CD14-positive monocyte (primary cell): ENCODE measurements at regions of chr9 and their contacts with region 1.

Region 1: GRCh38 chr9:26892251-26893029 is at the start of gene CAAP1:
- DNase-seq: peak; percentile 92 to 97 (median 93)
- H3K4me3 ChIP-seq: peak within 1 kb of the TSS; percentile 82 to 90 (median 87)
- H3K4me3 Mint-ChIP-seq: peak within 1 kb of the TSS; percentile 99 to 100
- H3K27ac ChIP-seq: peak within 1 kb of the TSS; percentile 83 to 91
- H3K27ac Mint-ChIP-seq: peak within 1 kb of the TSS; percentile 92 to 99 (median 98)
- H3K4me1 ChIP-seq: peaks cover 9 to 17% of the 10 kb centered on the region in 2 donors
- H3K4me1 Mint-ChIP-seq: peaks cover 24% of the 10 kb centered on the region
- H3K27me3 ChIP-seq: no peaks in the 10 kb centered on the region
- H3K27me3 Mint-ChIP-seq: peaks cover 0 to 3% (median 2%) of the 10 kb centered on the region in 3 donors
- CTCF ChIP-seq: peak; percentile 16
- polyA plus RNA-seq, gene CAAP1: 4.0 to 9.1 (median 8.7) TPM

Region 2: DNA sequence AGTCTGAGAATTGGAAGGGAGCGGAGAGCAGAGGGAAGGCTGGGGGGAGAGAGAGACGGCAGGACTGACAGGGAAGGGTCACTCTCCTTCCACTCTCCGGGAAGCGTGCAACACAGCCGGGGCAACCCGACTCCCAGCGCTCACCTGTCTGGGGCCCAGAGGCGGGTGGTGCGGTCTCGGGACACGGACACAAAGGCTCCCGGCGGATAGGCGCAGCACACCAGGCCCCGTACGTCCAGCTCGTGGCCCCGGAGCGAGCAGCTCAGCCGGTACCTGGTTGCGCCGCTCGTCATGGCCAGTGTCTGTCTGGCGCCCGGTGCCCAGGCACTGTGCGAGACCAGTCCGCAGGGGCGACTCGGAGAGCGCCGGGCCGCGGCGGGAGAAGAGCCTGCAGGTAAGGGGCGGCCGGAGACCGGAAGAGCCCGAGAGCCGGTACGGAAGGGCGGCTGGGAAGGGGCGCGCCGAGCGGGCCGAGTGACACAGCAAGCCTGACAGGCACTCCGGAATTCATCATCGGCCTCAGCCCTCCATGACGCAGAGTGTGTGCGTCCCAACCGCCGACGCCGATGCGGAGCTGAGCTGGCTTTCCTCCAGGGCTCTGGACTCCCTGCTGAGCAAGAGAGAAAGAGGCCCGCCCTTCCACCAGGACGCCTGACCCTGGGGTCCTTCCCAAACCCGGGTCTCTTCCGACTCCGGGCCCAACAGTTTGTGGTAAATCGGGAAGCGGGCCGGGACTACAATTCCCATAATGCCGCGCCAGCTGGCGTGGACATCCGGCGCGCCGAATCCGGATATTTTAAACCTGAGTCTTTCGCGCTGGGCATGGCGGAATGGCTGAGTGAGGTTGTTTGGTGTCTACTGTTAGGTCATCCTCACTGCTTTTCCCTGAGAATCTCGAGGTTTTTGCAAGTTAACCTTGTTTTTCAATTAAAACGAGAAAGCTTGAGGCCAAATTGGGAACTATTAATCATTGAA is 54.6 kb after region 1 on chr9 and contains the start of gene PLAA:
- intact Hi-C with region 1: loop called (anchors 5 kb)
- DNase-seq: peak; percentile 87 to 91 (median 91)
- H3K4me3 ChIP-seq: peak within 1 kb of the TSS; percentile 79 to 90 (median 87)
- H3K4me3 Mint-ChIP-seq: peak within 1 kb of the TSS; percentile 91 to 96
- H3K27ac ChIP-seq: peak within 1 kb of the TSS; percentile 91 to 100
- H3K27ac Mint-ChIP-seq: peak within 1 kb of the TSS; percentile 99 to 100 (median 100)
- H3K4me1 ChIP-seq: peaks cover 17 to 26% of the 10 kb centered on the region in 2 donors
- H3K4me1 Mint-ChIP-seq: peaks cover 34% of the 10 kb centered on the region
- H3K27me3 ChIP-seq: no peaks in the 10 kb centered on the region
- H3K27me3 Mint-ChIP-seq: peaks cover 0 to 1% (median 0%) of the 10 kb centered on the region in 3 donors
- CTCF ChIP-seq: no peak
- polyA plus RNA-seq, gene PLAA: 13.3 to 19.3 (median 14.7) TPM